PC-9 (cell line): ENCODE measurements at regions of chr3 and their contacts with region 1.

Region 1: GRCh38 chr3:182490596-182491491 is 302.5 kb upstream of the ATP11B start:
- DNase-seq: peak; percentile 12 to 37
- H3K4me3 ChIP-seq: no peak overlapping the region
- H3K27ac ChIP-seq: no peak overlapping the region
- H3K4me1 ChIP-seq: peaks cover 3% of the 10 kb centered on the region; the same call in 1 of the 2 replicates
- H3K27me3 ChIP-seq: no peaks in the 10 kb centered on the region
- CTCF ChIP-seq: peak; percentile 74

Region 2: GRCh38 chr3:181326637-181327223 is 1164.1 kb before region 1 on chr3:
- CTCF ChIA-PET with region 1: no interaction called
- POLR2A ChIA-PET with region 1: no interaction called
- intact Hi-C with region 1: loop called (anchors 10 kb)
- DNase-seq: no peak
- H3K4me3 ChIP-seq: no peak overlapping the region
- H3K27ac ChIP-seq: no peak overlapping the region
- H3K4me1 ChIP-seq: no peaks in the 10 kb centered on the region
- H3K27me3 ChIP-seq: no peaks in the 10 kb centered on the region; the same call in 1 of the 2 replicates
- CTCF ChIP-seq: peak; percentile 94

Region 3: DNA sequence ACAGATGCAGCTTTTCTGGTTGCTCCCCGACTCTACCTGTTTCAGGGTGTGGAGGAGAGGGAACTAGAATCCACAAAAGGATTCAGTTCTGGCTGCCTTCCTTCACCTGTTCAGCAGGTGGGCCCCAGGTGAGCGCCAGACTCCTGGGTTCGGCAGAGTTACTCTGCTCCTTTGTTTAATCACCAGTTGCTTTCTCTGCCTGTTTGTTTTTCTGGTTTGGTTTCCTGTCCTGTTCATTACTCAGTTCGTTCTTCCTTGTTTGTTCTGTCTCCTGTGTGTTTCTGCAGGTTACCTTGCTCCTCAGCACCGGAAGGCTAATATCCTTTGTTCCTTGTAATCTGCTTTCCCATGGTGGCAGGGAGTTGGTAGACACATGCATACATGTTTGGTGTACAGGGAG is 206.1 kb before region 1 on chr3:
- CTCF ChIA-PET with region 1: no interaction called
- POLR2A ChIA-PET with region 1: no interaction called
- intact Hi-C with region 1: loop called (anchors 10 kb)
- DNase-seq: peak; percentile 46 to 77
- H3K4me3 ChIP-seq: peak overlapping the region; percentile 6; the same call in 1 of the 2 replicates
- H3K27ac ChIP-seq: peak overlapping the region; percentile 44
- H3K4me1 ChIP-seq: peaks cover 18% of the 10 kb centered on the region
- H3K27me3 ChIP-seq: no peaks in the 10 kb centered on the region
- CTCF ChIP-seq: no peak